Left ventricle myocardium superior (tissue), 1 donor: ENCODE measurements at regions of chr14 and their contacts with region 1.

Region 1: DNA sequence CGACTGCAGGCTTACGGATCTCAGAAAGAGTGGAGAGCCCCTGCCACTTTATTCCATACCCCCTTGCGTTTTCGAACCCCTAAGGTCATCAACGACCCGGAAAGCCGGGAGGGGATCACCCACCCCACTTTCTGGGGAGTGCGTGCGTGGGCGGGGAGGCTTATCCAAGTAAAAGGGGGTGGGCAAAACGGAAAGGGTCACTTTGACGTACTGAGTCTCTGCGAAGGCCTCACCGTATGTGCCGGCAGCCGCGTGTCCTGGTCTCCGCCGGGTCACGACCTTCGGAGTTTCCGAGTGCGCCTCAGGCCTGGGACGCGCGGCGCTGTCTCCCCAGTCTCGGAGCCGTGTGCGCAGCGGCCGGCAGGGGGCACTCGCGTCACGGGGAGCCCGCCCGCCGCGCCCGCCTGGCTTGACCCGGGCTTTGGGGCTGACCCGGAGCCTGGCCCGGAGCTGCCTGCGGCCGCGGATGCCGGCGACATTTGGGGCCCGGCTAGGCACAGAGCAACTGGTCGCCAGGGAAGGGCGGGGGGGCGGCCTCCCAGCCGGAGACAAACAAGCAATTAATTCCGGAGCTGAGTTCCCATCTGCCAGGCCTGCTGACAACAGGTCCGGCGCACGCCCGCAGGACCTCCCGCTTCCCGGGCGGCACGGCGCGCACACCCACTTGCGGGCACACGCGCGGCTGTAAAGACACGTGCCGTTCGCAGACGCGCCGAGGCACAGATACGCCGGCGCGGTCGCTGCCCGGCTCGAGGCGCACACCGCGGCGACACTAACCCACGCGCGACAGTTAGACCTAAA is 890 bp upstream of the KIF26A start:
- DNase-seq: peak; percentile 85
- ATAC-seq: peak; percentile 88

Region 2: GRCh38 chr14:104078031-104078455 is 59.5 kb before region 1 on chr14:
- intact Hi-C with region 1: loop called (anchors 10 kb)
- DNase-seq: peak; percentile 87
- ATAC-seq: peak; percentile 82

Region 3: DNA sequence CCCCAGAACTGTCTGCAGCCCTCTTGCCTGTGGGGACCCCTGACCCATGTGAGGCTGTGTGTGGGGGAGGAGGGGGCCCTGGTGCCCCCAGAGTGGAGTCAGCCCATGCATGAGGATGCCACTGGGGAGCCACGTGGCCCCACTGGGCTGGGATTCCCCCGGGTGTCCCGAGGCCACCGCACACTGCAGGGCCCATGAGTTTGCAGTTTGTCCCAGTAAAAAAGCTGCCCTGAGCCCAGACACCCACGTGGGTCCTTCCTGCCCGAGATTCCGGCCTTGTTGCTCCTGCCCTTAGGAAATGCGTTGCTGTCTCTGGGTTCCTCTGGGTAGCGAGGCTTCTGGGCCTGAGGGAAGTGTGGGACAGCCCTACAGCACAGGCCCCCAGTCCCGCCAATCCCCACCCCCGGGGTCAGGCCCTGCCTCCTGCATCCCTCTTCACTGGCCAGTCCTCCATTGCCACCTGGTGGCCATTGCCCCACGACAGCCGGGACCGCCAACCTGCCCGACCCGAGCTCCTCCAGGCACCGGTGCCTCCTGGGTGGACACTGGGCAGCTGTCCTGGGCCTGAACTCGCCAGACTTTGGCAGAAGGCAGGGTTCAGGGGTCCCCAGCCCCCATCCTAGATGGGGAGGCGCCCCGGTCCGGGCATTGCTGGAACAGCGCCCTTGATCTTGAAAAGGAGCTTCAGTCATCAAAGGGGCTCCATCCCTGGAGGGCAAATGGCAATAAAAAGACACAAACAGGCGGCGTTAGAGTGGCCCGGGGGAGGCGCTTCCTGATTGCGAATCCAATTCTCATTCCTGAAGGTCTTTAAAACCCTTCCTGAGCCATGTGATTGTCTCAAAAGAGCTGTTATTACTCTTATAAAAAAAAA is 426.5 kb after region 1 on chr14:
- intact Hi-C with region 1: loop called (anchors 5 kb)
- DNase-seq: peak; percentile 80
- ATAC-seq: peak; percentile 84